Mammary epithelial cell (primary cell): ENCODE measurements at regions of chr10 and their contacts with region 1.

Region 1: GRCh38 chr10:74322141-74322540 is 171.1 kb downstream of the ADK start:
- DNase-seq: no peak
- H3K4me3 ChIP-seq: no peak overlapping the region
- H3K27ac ChIP-seq: no peak overlapping the region
- H3K4me1 ChIP-seq: no peaks in the 10 kb centered on the region
- H3K27me3 ChIP-seq: no peaks in the 10 kb centered on the region
- CTCF ChIP-seq: no peak

Region 2: GRCh38 chr10:74306227-74306982 is 15.7 kb before region 1 on chr10:
- CTCF ChIA-PET with region 1: interaction called, 10 read pairs
- dilution Hi-C with region 1: no loop called
- in situ Hi-C with region 1: no loop called
- intact Hi-C with region 1: no loop called
- DNase-seq: no peak
- H3K4me3 ChIP-seq: no peak overlapping the region
- H3K27ac ChIP-seq: no peak overlapping the region
- H3K4me1 ChIP-seq: peaks cover 12% of the 10 kb centered on the region
- H3K27me3 ChIP-seq: no peaks in the 10 kb centered on the region
- CTCF ChIP-seq: no peak

Region 3: DNA sequence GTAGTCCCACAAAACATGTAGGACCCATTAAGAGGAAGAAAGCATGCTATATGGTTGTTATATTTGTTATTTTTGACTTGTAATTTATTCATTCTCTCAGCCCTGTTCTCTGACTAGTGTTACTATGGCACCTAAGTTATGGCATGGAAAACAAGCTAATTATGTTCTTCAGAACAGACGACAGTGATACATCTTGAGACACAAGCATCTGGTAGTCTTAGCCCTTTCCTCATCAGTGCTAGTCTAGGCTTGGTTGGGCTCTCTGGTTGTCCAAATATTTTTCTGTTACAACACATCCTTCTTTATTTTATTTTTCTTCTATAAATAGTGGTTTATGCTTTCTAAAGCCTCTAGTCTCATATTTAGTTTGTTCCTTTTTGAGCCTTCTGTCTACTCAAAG is 195.9 kb after region 1 on chr10:
- CTCF ChIA-PET with region 1: no interaction called
- dilution Hi-C with region 1: no loop called
- in situ Hi-C with region 1: no loop called
- intact Hi-C with region 1: no loop called
- DNase-seq: peak; percentile 23
- H3K4me3 ChIP-seq: no peak overlapping the region
- H3K27ac ChIP-seq: no peak overlapping the region
- H3K4me1 ChIP-seq: no peaks in the 10 kb centered on the region
- H3K27me3 ChIP-seq: no peaks in the 10 kb centered on the region
- CTCF ChIP-seq: no peak